Activated CD4-positive, alpha-beta memory T cell treated with anti-CD3 and anti-CD28 coated beads, Interleukin-2, amount 10 ng/mL, durations not matched to agents 7 days and 5 days (primary cell): ENCODE measurements at regions of chr16 and their contacts with region 1.

Region 1: GRCh38 chr16:2531767-2532493 is 722 bp upstream of the CEMP1 start:
- DNase-seq: peak; percentile 99
- H3K4me3 Mint-ChIP-seq: peak overlapping the region; percentile 98
- H3K27ac Mint-ChIP-seq: peak overlapping the region; percentile 100
- H3K4me1 Mint-ChIP-seq: peaks cover 31% of the 10 kb centered on the region
- H3K27me3 Mint-ChIP-seq: no peaks in the 10 kb centered on the region

Region 2: DNA sequence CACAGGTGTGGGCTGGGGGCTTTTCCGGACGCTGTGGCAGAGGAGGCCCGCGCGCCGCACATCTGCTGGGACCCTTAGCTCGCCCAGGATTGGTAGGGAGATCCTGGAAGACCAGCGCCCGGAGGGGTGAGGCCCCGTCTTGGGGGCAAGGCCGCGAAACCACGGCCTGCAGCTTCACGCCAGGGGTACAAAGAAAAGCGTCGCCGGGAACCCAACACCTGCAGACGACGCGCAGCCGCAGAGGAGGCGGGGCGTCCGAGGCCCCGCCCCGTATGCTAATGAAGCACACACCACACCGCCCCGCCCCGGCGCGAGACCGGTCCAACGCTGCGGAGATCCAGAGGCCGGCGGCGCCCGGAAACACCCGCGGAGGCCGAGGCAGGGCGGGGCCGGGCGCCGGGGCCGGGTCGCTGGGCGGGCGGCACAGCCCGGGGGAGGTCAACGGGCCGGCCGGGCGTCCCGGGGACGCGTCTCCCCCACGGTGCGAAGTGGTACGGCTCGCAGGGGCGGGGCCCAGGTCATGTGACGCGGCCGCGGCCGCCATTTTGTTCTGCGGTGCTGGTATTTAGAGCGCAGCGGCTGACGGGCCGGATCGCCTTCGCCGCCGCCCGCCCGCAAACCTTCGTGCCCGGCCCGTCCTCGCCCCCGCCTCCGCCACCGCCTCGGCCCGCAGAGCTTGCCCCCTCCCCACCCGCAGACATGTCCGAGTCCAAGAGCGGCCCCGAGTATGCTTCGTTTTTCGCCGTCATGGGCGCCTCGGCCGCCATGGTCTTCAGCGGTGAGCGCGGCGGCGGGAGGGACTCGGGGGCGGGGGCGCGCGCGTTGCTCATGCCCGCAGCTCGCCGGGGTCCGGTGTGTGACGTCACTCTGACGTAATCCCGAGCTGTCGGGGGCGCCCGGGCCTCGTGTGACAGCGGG is 18.3 kb before region 1 on chr16 and contains the start of gene ATP6V0C:
- CTCF ChIA-PET with region 1: no interaction called
- POLR2A ChIA-PET with region 1: interaction called, 67 read pairs
- DNase-seq: peak; percentile 92
- H3K4me3 Mint-ChIP-seq: peak within 1 kb of the TSS; percentile 89
- H3K27ac Mint-ChIP-seq: peak within 1 kb of the TSS; percentile 91
- H3K4me1 Mint-ChIP-seq: peaks cover 50% of the 10 kb centered on the region
- H3K27me3 Mint-ChIP-seq: no peaks in the 10 kb centered on the region
- total RNA-seq, gene ATP6V0C: 112 to 125 TPM

Region 3: GRCh38 chr16:2520092-2520783 is 11.7 kb before region 1 on chr16 and contains the start of gene AMDHD2:
- CTCF ChIA-PET with region 1: interaction called, 7 read pairs
- POLR2A ChIA-PET with region 1: interaction called, 67 read pairs
- DNase-seq: peak; percentile 91
- H3K4me3 Mint-ChIP-seq: peak within 1 kb of the TSS; percentile 84
- H3K27ac Mint-ChIP-seq: peak within 1 kb of the TSS; percentile 92
- H3K4me1 Mint-ChIP-seq: peaks cover 51% of the 10 kb centered on the region
- H3K27me3 Mint-ChIP-seq: no peaks in the 10 kb centered on the region
- total RNA-seq, gene AMDHD2: 51.6 to 55.5 TPM